Natural killer cell (primary cell): ENCODE measurements at regions of chr2 and their contacts with region 1.

Region 1: DNA sequence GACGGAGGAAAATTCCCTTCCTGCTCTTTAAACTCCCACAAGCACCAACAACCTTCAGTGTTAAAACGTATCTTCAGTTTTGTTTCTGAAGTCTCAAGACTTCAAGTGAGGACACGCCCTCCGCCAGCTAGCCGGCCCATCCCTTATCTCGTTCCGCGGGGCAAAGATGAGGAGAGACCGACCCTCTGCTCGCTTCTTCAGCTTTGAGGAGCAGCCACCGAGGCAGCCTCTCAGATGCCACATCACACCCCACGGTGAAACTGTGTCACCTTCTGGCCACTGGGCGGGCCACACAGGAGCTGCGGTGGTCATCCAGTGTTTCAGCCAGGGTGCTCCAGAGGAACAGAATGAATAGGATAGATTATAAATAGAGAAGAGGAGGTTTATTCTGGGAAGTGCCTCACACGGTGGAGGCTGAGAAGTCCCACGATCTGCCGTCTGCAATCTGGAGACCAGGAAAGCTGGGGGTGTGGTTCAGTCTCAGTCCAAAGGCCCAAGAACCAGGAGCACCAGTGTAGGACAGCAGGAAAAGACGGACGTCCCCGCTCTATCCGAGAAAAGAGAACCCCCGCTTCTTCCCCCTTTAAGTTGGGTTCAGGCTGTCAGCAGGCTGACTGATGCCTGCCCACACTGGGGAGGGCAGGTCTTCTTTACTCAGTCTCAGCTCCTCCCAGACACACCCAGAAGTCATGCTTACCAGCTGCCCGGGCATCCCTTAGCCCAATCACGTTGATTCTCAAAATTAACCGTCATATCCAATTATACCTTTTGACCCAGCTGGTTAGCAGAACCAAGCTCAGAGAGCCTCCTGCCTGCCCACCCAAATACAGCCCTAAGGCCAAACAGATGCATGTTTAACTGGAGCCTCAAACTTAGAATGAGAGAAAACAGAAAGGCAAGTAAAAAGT is 399.7 kb upstream of the ID2 start:
- DNase-seq: peak; percentile 51 to 53
- ATAC-seq: peak; percentile 79 to 88 (median 82)
- H3K4me3 ChIP-seq: peak overlapping the region; percentile 60
- H3K4me3 Mint-ChIP-seq: peak overlapping the region; percentile 99
- H3K27ac ChIP-seq: peak overlapping the region; percentile 71
- H3K27ac Mint-ChIP-seq: peak overlapping the region; percentile 98 to 99
- H3K4me1 ChIP-seq: peaks cover 53% of the 10 kb centered on the region
- H3K4me1 Mint-ChIP-seq: peaks cover 67 to 84% of the 10 kb centered on the region in 2 donors
- H3K27me3 ChIP-seq: no peaks in the 10 kb centered on the region
- H3K27me3 Mint-ChIP-seq: no peaks in the 10 kb centered on the region
- CTCF ChIP-seq: no peak

Region 2: DNA sequence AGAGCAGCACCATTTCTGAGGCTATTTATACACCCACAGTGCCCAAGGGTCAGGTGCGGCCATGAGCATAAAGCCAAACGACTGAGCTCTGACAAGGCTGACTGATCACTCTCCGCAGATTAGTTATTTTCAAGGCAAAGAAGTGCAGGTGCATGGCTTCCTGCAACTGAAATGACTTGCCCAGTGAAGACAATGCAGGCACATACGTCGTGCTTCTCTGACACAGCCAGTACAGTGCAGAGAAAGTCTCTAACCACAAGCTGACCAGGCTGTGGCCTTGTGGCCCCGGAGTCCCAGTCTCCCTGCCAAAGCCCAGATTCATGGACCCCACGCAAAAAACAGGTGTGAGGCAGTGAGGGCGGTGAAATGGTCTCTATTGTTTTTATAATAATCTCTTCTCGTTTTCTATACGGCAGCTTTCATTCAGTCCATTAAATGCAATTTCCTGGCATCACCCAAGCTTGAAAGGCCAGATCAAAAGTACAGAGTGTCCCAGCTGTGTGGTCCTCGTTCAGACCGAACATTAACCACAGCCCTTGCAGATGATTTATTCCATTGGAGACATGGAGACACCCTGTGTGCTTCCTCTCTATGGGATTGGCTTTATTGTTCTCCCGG is 47.3 kb before region 1 on chr2:
- intact Hi-C with region 1: loop called (anchors 5 kb)
- DNase-seq: no peak
- ATAC-seq: peak in 1 of 3 donors; percentile 30
- H3K4me3 ChIP-seq: no peak overlapping the region
- H3K4me3 Mint-ChIP-seq: peak overlapping the region; percentile 32
- H3K27ac ChIP-seq: no peak overlapping the region
- H3K27ac Mint-ChIP-seq: peak overlapping the region; percentile 30 to 87
- H3K4me1 ChIP-seq: peaks cover 26% of the 10 kb centered on the region
- H3K4me1 Mint-ChIP-seq: peaks cover 54 to 73% of the 10 kb centered on the region in 2 donors
- H3K27me3 ChIP-seq: no peaks in the 10 kb centered on the region
- H3K27me3 Mint-ChIP-seq: no peaks in the 10 kb centered on the region
- CTCF ChIP-seq: no peak

Region 3: GRCh38 chr2:8488001-8488738 is 206.0 kb after region 1 on chr2:
- intact Hi-C with region 1: no loop called
- DNase-seq: peak; percentile 71 to 93
- ATAC-seq: peak; percentile 81 to 91 (median 91)
- H3K4me3 ChIP-seq: peak overlapping the region; percentile 30
- H3K4me3 Mint-ChIP-seq: peak overlapping the region; percentile 98
- H3K27ac ChIP-seq: peak overlapping the region; percentile 95
- H3K27ac Mint-ChIP-seq: peak overlapping the region; percentile 97 to 100
- H3K4me1 ChIP-seq: peaks cover 59% of the 10 kb centered on the region
- H3K4me1 Mint-ChIP-seq: peaks cover 68 to 69% of the 10 kb centered on the region in 2 donors
- H3K27me3 ChIP-seq: no peaks in the 10 kb centered on the region
- H3K27me3 Mint-ChIP-seq: no peaks in the 10 kb centered on the region
- CTCF ChIP-seq: no peak